ENCODE measurements at regions of chr10 and their contacts with region 1.

Region 1: GRCh38 chr10:93746844-93747284 is 10.9 kb upstream of the LGI1 start:
- DNase-seq: peak; percentile 70
- ATAC-seq: peak; percentile 66
- H3K4me3 Mint-ChIP-seq: no peak overlapping the region
- H3K27ac Mint-ChIP-seq: no peak overlapping the region
- H3K4me1 Mint-ChIP-seq: peaks cover 51% of the 10 kb centered on the region
- H3K27me3 Mint-ChIP-seq: no peaks in the 10 kb centered on the region; the same call in 1 of the 2 replicates
- CTCF ChIP-seq: peak; percentile 42; the same call in 1 of the 2 replicates

Region 2: DNA sequence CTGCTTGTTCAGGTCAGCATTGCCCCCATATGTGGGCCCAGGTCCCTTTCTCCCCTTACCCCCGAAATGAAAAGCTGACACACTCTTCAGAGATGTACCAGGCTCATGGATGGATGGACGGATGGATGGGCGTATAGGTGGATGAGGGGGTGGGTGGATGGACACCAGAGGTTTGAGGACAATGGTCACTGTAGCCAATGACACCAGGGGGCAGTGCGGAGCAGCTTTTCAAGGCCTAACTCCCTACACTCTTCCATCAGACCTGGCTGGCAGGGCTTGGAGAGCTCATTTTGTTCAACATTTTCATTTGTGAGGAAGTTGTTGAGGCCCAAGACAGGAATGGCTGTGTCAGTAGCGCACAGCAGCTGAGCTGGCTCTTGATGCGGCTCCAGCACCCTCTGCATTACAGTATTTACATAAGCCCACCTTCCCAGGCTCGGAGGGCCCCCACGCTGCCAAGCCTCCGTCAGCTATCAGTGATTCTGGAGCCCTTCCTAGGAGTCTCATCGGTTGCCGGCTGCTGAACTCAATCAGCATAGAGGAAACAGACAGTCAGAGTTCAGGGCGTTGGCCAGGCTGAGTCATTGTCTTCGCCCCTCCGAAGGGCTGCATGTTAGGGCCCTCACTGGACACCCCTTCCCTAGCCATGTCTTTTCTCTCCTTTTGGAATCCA is 192.0 kb before region 1 on chr10:
- CTCF ChIA-PET with region 1: interaction called, 40 read pairs
- POLR2A ChIA-PET with region 1: no interaction called
- DNase-seq: peak; percentile 85
- ATAC-seq: peak; percentile 95
- H3K4me3 Mint-ChIP-seq: 0 out of 2 replicates have a peak overlapping the region, but pooled peaks have one; percentile 0
- H3K27ac Mint-ChIP-seq: no peak overlapping the region
- H3K4me1 Mint-ChIP-seq: peaks cover 11% of the 10 kb centered on the region
- H3K27me3 Mint-ChIP-seq: no peaks in the 10 kb centered on the region
- CTCF ChIP-seq: peak; percentile 71

Region 3: DNA sequence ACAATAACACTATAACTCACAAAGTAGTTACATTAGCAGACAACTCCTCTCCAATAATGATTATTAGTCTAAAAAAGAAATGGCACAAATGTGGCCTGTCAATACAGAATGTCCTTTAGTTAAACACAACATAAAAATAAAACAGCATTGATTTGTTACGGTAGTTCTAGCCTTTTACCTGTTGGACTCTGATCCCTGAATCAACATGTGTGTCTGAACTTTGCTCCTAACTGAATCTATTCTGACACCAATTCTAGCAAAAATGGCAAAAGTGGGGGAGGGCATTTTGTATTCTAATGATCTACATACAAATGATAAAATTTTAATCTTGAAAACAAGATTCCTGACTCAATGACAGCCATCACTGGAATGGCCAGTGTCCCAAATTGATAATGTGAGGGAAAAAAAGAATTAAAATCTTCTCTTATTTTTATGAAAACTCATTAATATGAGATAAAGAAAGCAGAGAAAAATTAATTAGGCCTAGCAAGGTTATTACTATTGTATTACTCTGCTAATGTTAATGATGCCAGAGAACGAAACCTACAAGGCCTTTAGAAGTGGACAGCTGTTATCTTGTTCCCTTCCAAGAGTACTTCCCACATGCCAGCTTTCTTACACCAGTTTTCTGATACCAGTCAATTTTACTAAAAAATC is 74.7 kb before region 1 on chr10:
- CTCF ChIA-PET with region 1: no interaction called
- POLR2A ChIA-PET with region 1: no interaction called
- DNase-seq: no peak
- ATAC-seq: no peak
- H3K4me3 Mint-ChIP-seq: no peak overlapping the region
- H3K27ac Mint-ChIP-seq: no peak overlapping the region
- H3K4me1 Mint-ChIP-seq: no peaks in the 10 kb centered on the region
- H3K27me3 Mint-ChIP-seq: no peaks in the 10 kb centered on the region
- CTCF ChIP-seq: no peak

Region 4: DNA sequence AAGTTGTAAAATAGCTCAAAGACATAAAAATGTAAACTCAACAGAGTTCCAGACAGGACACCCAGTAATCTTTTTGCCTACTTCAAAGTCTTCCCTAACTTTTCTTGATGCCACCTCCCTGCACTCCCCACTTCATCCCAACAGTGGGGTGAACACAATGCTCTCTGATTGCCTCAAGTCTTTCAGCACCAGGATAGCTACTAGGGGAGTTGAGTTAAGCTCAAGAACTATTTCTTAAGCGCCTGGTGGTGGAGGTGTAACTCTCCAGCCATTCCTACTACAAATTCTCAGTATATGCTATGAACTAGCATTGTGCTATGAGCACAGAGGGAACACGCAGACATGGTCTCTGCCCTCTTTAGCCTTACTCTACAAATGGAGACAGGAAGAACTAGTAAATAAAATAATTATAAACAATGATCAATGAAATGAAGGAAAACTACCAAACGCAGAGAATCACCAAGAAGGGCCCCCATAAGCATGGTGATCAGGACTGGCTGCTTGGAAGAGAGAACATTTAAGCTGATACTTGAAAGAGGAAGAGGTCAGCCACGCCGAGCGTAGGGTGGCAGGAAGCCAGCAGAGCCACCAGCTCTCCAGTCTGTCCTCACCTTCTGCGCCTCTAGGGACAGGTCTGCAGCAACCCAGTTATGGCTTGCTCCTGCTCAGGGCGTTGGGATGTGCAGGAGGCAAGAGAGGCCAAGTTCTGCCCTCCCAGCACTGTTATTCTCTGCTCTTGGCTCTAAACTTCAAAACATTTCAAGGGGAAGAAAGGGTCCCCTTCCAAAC is 27.7 kb before region 1 on chr10:
- CTCF ChIA-PET with region 1: interaction called, 16 read pairs
- POLR2A ChIA-PET with region 1: no interaction called
- DNase-seq: no peak
- ATAC-seq: peak; percentile 67
- H3K4me3 Mint-ChIP-seq: no peak overlapping the region
- H3K27ac Mint-ChIP-seq: no peak overlapping the region
- H3K4me1 Mint-ChIP-seq: peaks cover 14% of the 10 kb centered on the region
- H3K27me3 Mint-ChIP-seq: peaks cover 2% of the 10 kb centered on the region; the same call in 1 of the 2 replicates
- CTCF ChIP-seq: no peak

Region 5: DNA sequence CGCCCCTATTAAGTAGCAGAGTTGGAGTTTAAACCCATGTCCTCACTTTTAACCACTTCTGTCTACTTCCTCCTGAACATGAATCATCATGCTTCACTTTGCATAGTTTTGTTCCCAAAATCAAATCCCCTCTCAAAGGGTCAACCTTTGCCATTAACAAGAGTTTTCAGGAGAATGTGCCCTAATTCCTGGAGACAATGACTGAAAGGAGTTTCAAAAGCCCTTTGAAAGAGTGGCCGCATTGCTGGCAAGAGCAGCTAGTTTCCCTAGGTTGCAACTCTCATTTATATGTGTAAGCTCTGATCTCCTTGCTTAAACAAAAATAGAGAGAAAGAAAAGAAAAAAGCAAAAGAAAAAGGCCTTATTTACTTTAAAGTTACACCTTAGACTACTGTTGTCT is 20.1 kb after region 1 on chr10:
- CTCF ChIA-PET with region 1: interaction called, 20 read pairs
- POLR2A ChIA-PET with region 1: no interaction called
- DNase-seq: no peak
- ATAC-seq: no peak
- H3K4me3 Mint-ChIP-seq: no peak overlapping the region
- H3K27ac Mint-ChIP-seq: no peak overlapping the region
- H3K4me1 Mint-ChIP-seq: peaks cover 30% of the 10 kb centered on the region
- H3K27me3 Mint-ChIP-seq: peaks cover 2% of the 10 kb centered on the region; the same call in 1 of the 2 replicates
- CTCF ChIP-seq: no peak

Region 6: DNA sequence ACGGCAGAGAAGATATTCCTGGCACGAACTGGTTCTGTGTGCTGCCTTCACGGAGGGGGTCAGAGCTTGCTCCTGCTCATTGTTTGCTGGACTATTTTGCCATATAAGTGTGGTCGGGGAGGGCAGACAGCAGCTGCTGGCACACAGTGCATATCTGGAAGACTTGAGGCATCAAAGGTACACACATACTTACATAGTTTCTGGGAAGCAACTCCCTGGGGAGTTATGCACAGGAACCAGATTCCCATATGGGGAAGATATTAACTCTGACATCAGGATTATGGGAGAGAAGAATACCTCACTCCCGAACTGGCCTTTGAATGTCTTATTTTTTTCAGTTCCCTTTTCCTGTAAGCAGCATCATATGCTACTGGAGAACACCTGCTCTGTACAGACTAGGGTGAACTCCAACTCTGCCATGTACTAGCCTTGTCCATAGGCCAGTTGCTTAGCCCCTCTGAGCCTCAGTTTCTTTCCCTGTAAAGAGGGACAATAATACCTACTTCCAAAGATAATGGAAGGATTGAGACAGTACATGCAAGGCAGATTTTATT is 52.4 kb after region 1 on chr10:
- CTCF ChIA-PET with region 1: interaction called, 47 read pairs
- POLR2A ChIA-PET with region 1: no interaction called
- DNase-seq: no peak
- ATAC-seq: no peak
- H3K4me3 Mint-ChIP-seq: no peak overlapping the region
- H3K27ac Mint-ChIP-seq: no peak overlapping the region
- H3K4me1 Mint-ChIP-seq: peaks cover 4% of the 10 kb centered on the region; the same call in 1 of the 2 replicates
- H3K27me3 Mint-ChIP-seq: peaks cover 7% of the 10 kb centered on the region
- CTCF ChIP-seq: no peak

Region 7: GRCh38 chr10:93816123-93816747 is 69.4 kb after region 1 on chr10:
- CTCF ChIA-PET with region 1: interaction called, 425 read pairs
- POLR2A ChIA-PET with region 1: interaction called, 6 read pairs
- DNase-seq: peak; percentile 62
- ATAC-seq: peak; percentile 79
- H3K4me3 Mint-ChIP-seq: no peak overlapping the region
- H3K27ac Mint-ChIP-seq: no peak overlapping the region
- H3K4me1 Mint-ChIP-seq: peaks cover 15% of the 10 kb centered on the region
- H3K27me3 Mint-ChIP-seq: peaks cover 42% of the 10 kb centered on the region
- CTCF ChIP-seq: peak; percentile 45

Region 8: DNA sequence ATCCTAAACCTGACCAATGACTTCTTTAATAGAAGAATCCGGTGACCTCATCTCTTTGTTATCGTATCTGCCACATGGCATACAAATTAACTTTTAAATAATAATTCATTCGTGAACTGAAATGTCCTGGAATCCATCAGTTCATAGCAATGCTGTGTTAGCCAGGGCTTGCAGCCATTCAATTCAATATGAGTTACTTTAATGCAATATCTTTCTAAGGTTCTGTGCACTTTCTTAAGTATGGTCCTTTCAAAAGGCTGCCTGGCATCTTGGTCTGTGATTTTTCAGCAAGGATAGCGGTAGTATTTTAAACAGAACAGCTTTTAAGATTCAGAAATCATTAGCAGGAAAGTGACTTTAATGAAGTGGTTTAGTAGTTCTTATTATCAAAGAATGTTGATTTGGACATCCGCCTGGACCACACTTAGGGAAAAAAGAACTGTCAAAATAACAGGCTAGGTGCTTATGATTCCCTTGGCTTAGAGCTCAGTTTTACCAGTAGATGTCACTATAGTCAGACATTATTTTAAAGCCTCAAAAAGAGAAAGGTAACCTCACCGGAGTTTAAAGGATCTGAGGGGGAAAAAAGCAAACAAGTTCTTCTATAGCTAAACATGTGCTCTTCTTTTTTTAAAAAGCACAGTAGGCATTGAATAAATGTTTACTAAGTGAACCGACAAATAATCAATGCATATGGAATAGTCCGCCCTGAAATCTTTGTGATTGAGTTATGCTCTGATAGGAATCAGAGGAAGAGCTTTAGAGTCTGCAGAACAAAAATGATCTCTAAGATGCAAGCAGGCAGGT is 169.6 kb after region 1 on chr10:
- CTCF ChIA-PET with region 1: interaction called, 20 read pairs
- POLR2A ChIA-PET with region 1: no interaction called
- DNase-seq: no peak
- ATAC-seq: peak; percentile 61
- H3K4me3 Mint-ChIP-seq: peak overlapping the region; percentile 41
- H3K27ac Mint-ChIP-seq: no peak overlapping the region
- H3K4me1 Mint-ChIP-seq: peaks cover 11% of the 10 kb centered on the region
- H3K27me3 Mint-ChIP-seq: no peaks in the 10 kb centered on the region
- CTCF ChIP-seq: no peak